ENCODE measurements at regions of chr2 and their contacts with region 1.

Region 1: DNA sequence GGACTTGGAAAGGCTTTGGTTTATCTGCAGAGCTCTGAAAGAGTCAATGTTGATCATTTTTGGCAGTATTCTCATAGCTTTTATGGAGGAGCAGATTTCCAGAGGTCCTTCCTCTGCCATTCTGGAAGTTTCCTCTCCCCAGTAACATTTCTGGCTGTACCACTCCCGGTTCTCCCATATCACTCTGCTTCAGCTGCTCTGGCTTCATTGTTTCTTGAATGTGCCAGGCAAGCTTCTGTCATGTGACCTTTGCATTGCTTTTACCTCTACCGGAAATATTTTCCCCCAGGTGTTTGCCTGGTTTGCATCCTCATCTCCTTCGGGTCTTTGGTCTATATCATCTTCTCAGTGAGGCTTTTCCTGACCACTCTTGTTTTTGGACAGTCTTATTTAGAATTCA is 12.4 kb downstream of the PCYOX1 start:
- DNase-seq: no peak
- ATAC-seq: no peak
- H3K4me3 ChIP-seq: peak overlapping the region in 1 of 3 experiments; percentile 32; a peak in 1 of 6 replicates
- H3K27ac ChIP-seq: peak overlapping the region; percentile 78
- H3K4me1 ChIP-seq: peaks cover 28% of the 10 kb centered on the region
- H3K27me3 ChIP-seq: no peaks in the 10 kb centered on the region
- CTCF ChIP-seq: no peak
- EP300 ChIP-seq: no peak
- POLR2A ChIP-seq: no peak
- RAD21 ChIP-seq: no peak

Region 2: GRCh38 chr2:70173520-70173919 is 96.8 kb before region 1 on chr2:
- CTCF ChIA-PET with region 1: no interaction called
- POLR2A ChIA-PET with region 1: no interaction called
- in situ Hi-C with region 1: no loop called
- intact Hi-C with region 1: no loop called
- DNase-seq: no peak
- ATAC-seq: no peak
- H3K4me3 ChIP-seq: no peak overlapping the region
- H3K27ac ChIP-seq: no peak overlapping the region
- H3K4me1 ChIP-seq: peaks cover 8% of the 10 kb centered on the region
- H3K27me3 ChIP-seq: no peaks in the 10 kb centered on the region
- CTCF ChIP-seq: no peak
- EP300 ChIP-seq: no peak
- POLR2A ChIP-seq: no peak
- RAD21 ChIP-seq: no peak

Region 3: DNA sequence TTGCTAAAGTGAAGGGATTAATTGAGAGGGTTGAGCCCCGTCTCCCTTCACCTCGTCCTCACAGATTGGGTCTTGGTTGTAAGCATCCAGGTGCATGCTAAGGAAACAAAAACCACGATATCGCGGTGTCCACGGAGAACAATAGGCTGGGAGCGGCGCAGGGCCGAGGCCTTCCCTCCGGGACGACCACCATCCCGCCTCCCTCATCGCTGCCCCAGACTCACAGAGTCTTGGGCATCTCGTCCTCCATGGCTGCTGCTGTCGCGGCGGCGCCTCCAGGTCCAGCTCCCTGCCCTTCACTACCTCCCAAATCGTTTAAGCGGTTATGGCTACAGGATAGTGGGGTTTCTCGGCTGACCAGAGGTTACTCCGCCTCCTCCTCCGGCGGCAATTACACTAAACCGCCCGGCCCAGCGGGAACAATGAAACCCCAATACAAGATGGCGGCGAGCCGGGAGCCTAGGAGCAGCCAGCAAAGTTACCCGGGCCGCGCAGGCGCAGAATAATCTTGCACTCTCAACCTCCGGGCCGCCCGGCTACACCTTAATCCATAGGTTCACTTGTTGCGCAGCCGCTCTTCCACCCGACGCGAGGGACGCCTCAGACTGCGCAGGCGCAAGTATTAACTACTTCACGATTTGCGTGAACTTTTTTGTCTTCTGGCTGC is 22.0 kb before region 1 on chr2 and contains the start of gene TIA1:
- CTCF ChIA-PET with region 1: no interaction called
- POLR2A ChIA-PET with region 1: interaction called, 14 read pairs
- in situ Hi-C with region 1: no loop called
- intact Hi-C with region 1: loop called (anchors 1 kb)
- DNase-seq: peak; percentile 99
- ATAC-seq: peak; percentile 93
- H3K4me3 ChIP-seq: peak within 1 kb of the TSS; percentile 96 to 98 (median 98)
- H3K27ac ChIP-seq: peak within 1 kb of the TSS; percentile 98
- H3K4me1 ChIP-seq: peaks cover 47% of the 10 kb centered on the region
- H3K27me3 ChIP-seq: no peaks in the 10 kb centered on the region; a peak in 1 of 5 replicates
- CTCF ChIP-seq: no peak
- EP300 ChIP-seq: peak in 1 of 2 experiments; percentile 54; a peak in 1 of 4 replicates
- POLR2A ChIP-seq: peak; percentile 92 to 98
- RAD21 ChIP-seq: peak; percentile 37; the same call in 1 of the 2 replicates
- total RNA-seq, gene TIA1: 199 and 209 TPM in 2 replicates

Region 4: GRCh38 chr2:70258532-70258874 is 11.8 kb before region 1 on chr2:
- CTCF ChIA-PET with region 1: no interaction called
- POLR2A ChIA-PET with region 1: interaction called, 69 read pairs
- in situ Hi-C with region 1: no loop called
- intact Hi-C with region 1: loop called (anchors 1 kb)
- DNase-seq: peak; percentile 41
- ATAC-seq: peak; percentile 70
- H3K4me3 ChIP-seq: peak overlapping the region; percentile 83 to 90 (median 83)
- H3K27ac ChIP-seq: peak overlapping the region; percentile 82
- H3K4me1 ChIP-seq: peaks cover 44% of the 10 kb centered on the region
- H3K27me3 ChIP-seq: no peaks in the 10 kb centered on the region; a peak in 1 of 5 replicates
- CTCF ChIP-seq: no peak
- EP300 ChIP-seq: no peak
- POLR2A ChIP-seq: no peak
- RAD21 ChIP-seq: no peak

Region 5: GRCh38 chr2:70283500-70284191 is 13.3 kb after region 1 on chr2:
- CTCF ChIA-PET with region 1: no interaction called
- POLR2A ChIA-PET with region 1: interaction called, 19 read pairs
- in situ Hi-C with region 1: no loop called
- intact Hi-C with region 1: no loop called
- DNase-seq: no peak
- ATAC-seq: peak; percentile 14; the same call in 1 of the 3 replicates
- H3K4me3 ChIP-seq: no peak overlapping the region
- H3K27ac ChIP-seq: no peak overlapping the region
- H3K4me1 ChIP-seq: 0 out of 2 replicates have a peak, but pooled peaks cover 21% of the 10 kb centered on the region
- H3K27me3 ChIP-seq: no peaks in the 10 kb centered on the region
- CTCF ChIP-seq: no peak
- EP300 ChIP-seq: no peak
- POLR2A ChIP-seq: no peak
- RAD21 ChIP-seq: no peak